Heart left ventricle (tissue), 16 donors: ENCODE measurements at regions of chr12 and their contacts with region 1.

Region 1: DNA sequence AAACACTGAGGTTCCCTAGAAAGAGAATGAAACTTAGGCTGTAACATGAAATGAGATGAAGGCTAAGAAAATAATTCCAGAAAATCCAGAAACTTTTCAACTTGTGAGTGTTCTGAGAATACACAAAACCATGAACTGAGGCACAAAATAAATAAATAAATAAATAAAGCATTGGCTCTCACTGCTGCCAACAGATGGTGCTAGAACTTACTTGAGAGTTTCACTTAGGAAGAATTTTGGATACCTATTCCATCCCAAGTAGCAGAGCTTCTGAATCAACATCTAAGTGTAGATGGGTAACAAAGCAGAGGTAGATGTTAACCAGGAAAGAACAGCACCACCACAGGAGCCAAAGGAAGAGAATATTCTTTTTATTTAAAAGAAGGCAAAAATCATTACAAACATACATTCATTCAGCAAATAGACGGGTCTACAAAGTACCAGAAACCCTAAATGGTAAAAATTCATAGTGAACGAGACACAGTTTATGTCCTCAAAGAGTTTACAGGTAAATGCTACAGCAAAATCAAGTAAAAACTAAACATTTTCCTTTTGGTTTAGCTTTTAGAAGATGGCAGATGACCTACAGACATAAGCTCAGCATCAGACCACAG is 16.7 kb downstream of the EPS8 start:
- DNase-seq: no peak
- ATAC-seq: no peak
- H3K4me3 ChIP-seq: no peak overlapping the region
- H3K27ac ChIP-seq: no peak overlapping the region
- H3K4me1 ChIP-seq: peaks cover 0 to 65% (median 3%) of the 10 kb centered on the region in 12 donors
- H3K27me3 ChIP-seq: no peaks in the 10 kb centered on the region
- CTCF ChIP-seq: peak; percentile 11 to 63 (median 33)
- POLR2A ChIP-seq: no peak

Region 2: GRCh38 chr12:15011162-15011561 is 761.4 kb before region 1 on chr12:
- intact Hi-C with region 1: no loop called
- DNase-seq: no peak
- ATAC-seq: no peak
- H3K4me3 ChIP-seq: no peak overlapping the region
- H3K27ac ChIP-seq: no peak overlapping the region
- H3K4me1 ChIP-seq: peaks cover 0 to 5% (median 0%) of the 10 kb centered on the region in 12 donors
- H3K27me3 ChIP-seq: peaks cover 0 to 10% (median 0%) of the 10 kb centered on the region in 9 donors
- CTCF ChIP-seq: no peak
- POLR2A ChIP-seq: no peak

Region 3: DNA sequence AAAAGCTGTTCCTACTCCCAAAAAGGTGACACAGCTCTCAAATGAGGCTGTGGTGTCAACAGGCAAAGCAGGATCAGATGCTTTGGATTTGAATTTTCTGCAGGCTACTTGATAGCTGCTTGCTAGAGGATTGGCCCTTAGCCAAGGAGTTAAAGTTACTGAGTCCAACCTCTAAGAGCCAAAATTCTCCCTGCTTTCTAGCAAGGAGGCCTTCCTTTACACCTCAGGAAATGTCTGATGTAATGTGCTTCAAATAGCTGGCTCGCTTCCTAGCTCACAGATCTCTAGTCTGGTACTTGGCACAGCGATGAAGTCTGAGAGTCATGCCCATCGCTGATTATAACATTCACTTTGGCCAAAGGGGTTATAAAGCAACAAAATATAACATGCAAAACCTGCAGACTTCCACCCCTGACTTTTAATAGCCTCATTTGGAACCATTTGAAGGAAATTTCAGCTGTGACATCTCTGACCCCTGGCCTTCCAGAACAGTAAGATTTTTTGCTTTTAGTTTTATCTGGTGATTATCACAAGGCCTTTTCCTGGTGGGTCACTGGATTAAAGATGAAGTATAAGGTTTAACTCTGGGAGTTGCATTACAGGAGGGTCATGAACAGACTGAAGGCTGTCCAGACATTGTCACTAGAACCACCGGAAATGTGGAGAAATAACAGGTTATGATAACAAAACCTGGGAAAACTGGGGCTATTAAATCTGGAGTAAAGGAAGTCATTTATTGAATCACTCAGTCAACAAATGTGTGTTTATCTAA is 173.1 kb before region 1 on chr12:
- intact Hi-C with region 1: loop called in 2 of 10 experiments (anchors 5 kb)
- DNase-seq: peak in 4 of 5 donors; percentile 34 to 65 (median 47)
- ATAC-seq: peak; percentile 69 to 93 (median 88)
- H3K4me3 ChIP-seq: no peak overlapping the region
- H3K27ac ChIP-seq: peak overlapping the region in 8 of 12 donors; percentile 9 to 57 (median 28)
- H3K4me1 ChIP-seq: peaks cover 0 to 45% (median 29%) of the 10 kb centered on the region in 12 donors
- H3K27me3 ChIP-seq: no peaks in the 10 kb centered on the region
- CTCF ChIP-seq: no peak
- POLR2A ChIP-seq: no peak

Region 4: GRCh38 chr12:15688202-15688736 is 84.2 kb before region 1 on chr12:
- intact Hi-C with region 1: loop called in 1 of 10 experiments (anchors 5 kb)
- DNase-seq: peak; percentile 52 to 77 (median 71)
- ATAC-seq: peak in 3 of 4 donors; percentile 82 to 88 (median 87)
- H3K4me3 ChIP-seq: peak overlapping the region in 9 of 12 donors; percentile 3 to 46 (median 23)
- H3K27ac ChIP-seq: peak overlapping the region in 11 of 12 donors; percentile 41 to 83 (median 62)
- H3K4me1 ChIP-seq: peaks cover 0 to 64% (median 23%) of the 10 kb centered on the region in 12 donors
- H3K27me3 ChIP-seq: no peaks in the 10 kb centered on the region
- CTCF ChIP-seq: no peak
- POLR2A ChIP-seq: peak in 1 of 2 donors; percentile 45